GM12878 (cell line): ENCODE measurements at regions of chr13 and their contacts with region 1.

Region 1: DNA sequence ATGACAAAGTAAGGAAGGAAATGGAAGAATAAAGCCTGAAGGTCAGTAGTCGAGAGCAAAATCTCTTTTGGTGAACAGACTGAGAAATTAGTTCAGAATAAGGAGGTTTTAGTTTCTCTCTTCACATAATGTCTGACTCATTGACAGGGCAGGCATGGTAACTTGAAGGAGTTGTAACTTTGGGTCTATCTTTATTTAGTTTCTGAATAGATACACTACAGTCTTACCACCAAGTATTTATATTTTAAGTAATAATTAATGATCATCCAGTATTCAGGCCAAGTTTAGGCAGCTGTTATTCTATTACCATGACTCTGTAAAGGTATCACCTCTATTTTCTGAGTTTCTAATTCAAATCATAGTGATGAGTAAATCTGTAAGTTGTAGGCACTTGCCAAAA is 219.9 kb downstream of the SPRY2 start:
- DNase-seq: no peak
- ATAC-seq: peak; percentile 84
- H3K4me3 ChIP-seq: no peak overlapping the region
- H3K27ac ChIP-seq: no peak overlapping the region
- H3K4me1 ChIP-seq: no peaks in the 10 kb centered on the region
- H3K27me3 ChIP-seq: no peaks in the 10 kb centered on the region
- CTCF ChIP-seq: no peak
- EP300 ChIP-seq: no peak
- POLR2A ChIP-seq: no peak
- RAD21 ChIP-seq: no peak

Region 2: DNA sequence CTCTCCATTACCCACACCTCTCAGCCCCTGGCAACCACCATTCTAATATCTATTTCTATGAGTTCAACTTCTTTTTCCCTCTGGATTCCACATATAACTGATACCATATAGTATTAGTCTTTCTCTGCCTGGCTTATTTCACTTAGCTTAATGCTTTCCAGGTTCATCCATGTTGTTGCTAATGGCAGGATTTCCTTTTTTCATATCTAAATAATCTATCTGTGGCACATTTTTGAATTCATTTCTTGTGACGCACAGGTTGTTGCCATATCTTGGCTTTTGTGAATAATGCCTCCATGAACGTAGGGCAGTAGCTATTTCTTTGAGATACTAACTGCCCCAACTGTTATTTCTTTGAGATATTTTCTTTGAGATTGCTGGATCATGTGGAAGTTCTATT is 15.7 kb before region 1 on chr13:
- CTCF ChIA-PET with region 1: interaction called, 3 read pairs
- POLR2A ChIA-PET with region 1: no interaction called
- RAD21 ChIA-PET with region 1: interaction called, 3 read pairs
- SMC1A ChIA-PET with region 1: interaction called, 10 read pairs
- in situ Hi-C with region 1: no loop called
- intact Hi-C with region 1: no loop called
- DNase-seq: no peak
- ATAC-seq: no peak
- H3K4me3 ChIP-seq: no peak overlapping the region
- H3K27ac ChIP-seq: no peak overlapping the region
- H3K4me1 ChIP-seq: no peaks in the 10 kb centered on the region
- H3K27me3 ChIP-seq: no peaks in the 10 kb centered on the region
- CTCF ChIP-seq: no peak
- EP300 ChIP-seq: no peak
- POLR2A ChIP-seq: no peak
- RAD21 ChIP-seq: no peak

Region 3: GRCh38 chr13:80132741-80133601 is 11.9 kb after region 1 on chr13:
- CTCF ChIA-PET with region 1: interaction called, 6 read pairs
- POLR2A ChIA-PET with region 1: interaction called, 4 read pairs
- RAD21 ChIA-PET with region 1: interaction called, 8 read pairs
- SMC1A ChIA-PET with region 1: interaction called, 27 read pairs
- in situ Hi-C with region 1: no loop called
- intact Hi-C with region 1: no loop called
- DNase-seq: no peak
- ATAC-seq: peak; percentile 56
- H3K4me3 ChIP-seq: no peak overlapping the region
- H3K27ac ChIP-seq: no peak overlapping the region
- H3K4me1 ChIP-seq: no peaks in the 10 kb centered on the region
- H3K27me3 ChIP-seq: no peaks in the 10 kb centered on the region
- CTCF ChIP-seq: no peak
- EP300 ChIP-seq: no peak
- POLR2A ChIP-seq: no peak
- RAD21 ChIP-seq: no peak